ENCODE measurements at regions of chr5 and their contacts with region 1.

Region 1: DNA sequence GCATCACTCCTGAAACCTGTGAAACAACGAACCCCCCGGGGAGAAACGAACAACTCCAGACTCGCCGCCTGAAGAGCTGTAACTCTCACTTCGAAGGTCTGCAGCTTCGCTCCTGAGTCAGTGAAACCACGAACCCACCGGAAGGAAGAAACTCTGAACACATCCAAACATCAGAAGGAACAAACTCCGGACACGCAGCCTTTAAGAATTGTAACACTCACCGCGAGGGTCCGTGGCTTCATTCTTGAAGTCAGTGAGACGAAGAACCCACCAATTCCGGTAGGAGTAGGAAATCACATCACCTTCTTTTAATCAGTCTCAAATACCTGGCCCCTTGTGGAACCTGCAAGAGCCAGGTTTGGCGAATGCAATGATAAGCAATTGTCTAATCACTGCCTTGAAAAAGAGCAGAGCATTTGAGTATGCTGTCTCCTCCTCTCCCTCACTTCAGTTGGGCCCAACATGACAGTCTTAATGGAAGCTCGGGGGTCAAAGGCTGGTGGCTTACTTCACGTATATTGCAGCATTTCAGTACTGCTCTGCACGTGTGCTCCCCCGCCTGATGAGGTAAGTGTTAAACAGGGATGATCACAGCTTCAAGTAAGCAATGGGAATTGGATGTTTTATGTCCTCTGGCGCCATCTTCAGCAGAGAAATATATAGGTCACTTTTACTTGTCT is 473 bp downstream of the IRGM start:
- DNase-seq: peak; percentile 82
- ATAC-seq: peak; percentile 96
- H3K4me3 Mint-ChIP-seq: peak overlapping the region; percentile 73
- H3K27ac Mint-ChIP-seq: peak overlapping the region; percentile 93
- H3K4me1 Mint-ChIP-seq: peaks cover 31% of the 10 kb centered on the region
- H3K27me3 Mint-ChIP-seq: no peaks in the 10 kb centered on the region

Region 2: DNA sequence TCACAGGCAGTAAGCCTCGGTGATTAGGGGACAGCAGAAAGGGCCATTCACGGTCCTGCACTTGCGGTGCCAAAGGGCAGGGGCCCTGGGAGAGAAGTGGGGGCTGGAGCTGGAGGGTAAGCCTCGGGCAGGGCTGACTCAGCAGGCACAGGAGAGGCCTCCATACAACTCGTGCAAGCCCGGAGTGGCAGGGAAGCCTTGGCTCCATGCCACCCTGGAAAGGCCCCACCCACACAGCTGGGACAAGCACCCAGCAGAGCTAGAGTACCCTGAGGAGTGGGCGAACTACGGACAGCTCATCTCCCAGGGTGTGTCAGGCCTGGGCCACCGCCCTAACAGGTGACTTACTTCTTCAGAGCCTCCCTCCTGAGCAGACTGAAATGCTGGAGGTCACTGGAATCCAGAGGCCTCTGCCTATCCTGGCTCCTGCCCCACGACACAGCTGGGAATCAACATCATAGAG is 551.6 kb before region 1 on chr5:
- CTCF ChIA-PET with region 1: no interaction called
- DNase-seq: no peak
- ATAC-seq: no peak
- H3K4me3 Mint-ChIP-seq: no peak overlapping the region
- H3K27ac Mint-ChIP-seq: no peak overlapping the region
- H3K4me1 Mint-ChIP-seq: no peaks in the 10 kb centered on the region
- H3K27me3 Mint-ChIP-seq: peaks cover 20% of the 10 kb centered on the region

Region 3: GRCh38 chr5:150458819-150459557 is 387.8 kb before region 1 on chr5:
- CTCF ChIA-PET with region 1: interaction called, 13 read pairs
- DNase-seq: peak; percentile 87
- ATAC-seq: peak; percentile 99
- H3K4me3 Mint-ChIP-seq: no peak overlapping the region
- H3K27ac Mint-ChIP-seq: peak overlapping the region; percentile 18
- H3K4me1 Mint-ChIP-seq: peaks cover 23% of the 10 kb centered on the region
- H3K27me3 Mint-ChIP-seq: no peaks in the 10 kb centered on the region

Region 4: GRCh38 chr5:150656191-150657132 is 190.3 kb before region 1 on chr5:
- CTCF ChIA-PET with region 1: interaction called, 11 read pairs
- DNase-seq: peak; percentile 82
- ATAC-seq: peak; percentile 89
- H3K4me3 Mint-ChIP-seq: peak overlapping the region; percentile 65
- H3K27ac Mint-ChIP-seq: peak overlapping the region; percentile 51
- H3K4me1 Mint-ChIP-seq: peaks cover 10% of the 10 kb centered on the region
- H3K27me3 Mint-ChIP-seq: peaks cover 12% of the 10 kb centered on the region

Region 5: GRCh38 chr5:150758531-150759333 is 88.1 kb before region 1 on chr5 and contains the start of gene DCTN4:
- CTCF ChIA-PET with region 1: interaction called, 21 read pairs
- DNase-seq: peak; percentile 96
- ATAC-seq: peak; percentile 97
- H3K4me3 Mint-ChIP-seq: no peak within 1 kb of the TSS
- H3K27ac Mint-ChIP-seq: no peak within 1 kb of the TSS
- H3K4me1 Mint-ChIP-seq: peaks cover 23% of the 10 kb centered on the region
- H3K27me3 Mint-ChIP-seq: no peaks in the 10 kb centered on the region
- total RNA-seq, gene DCTN4: 41.9 to 46.1 TPM

Region 6: GRCh38 chr5:150789943-150790611 is 56.7 kb before region 1 on chr5:
- CTCF ChIA-PET with region 1: interaction called, 14 read pairs
- DNase-seq: peak; percentile 85
- ATAC-seq: peak; percentile 100
- H3K4me3 Mint-ChIP-seq: peak overlapping the region; percentile 61
- H3K27ac Mint-ChIP-seq: peak overlapping the region; percentile 81
- H3K4me1 Mint-ChIP-seq: peaks cover 51% of the 10 kb centered on the region
- H3K27me3 Mint-ChIP-seq: no peaks in the 10 kb centered on the region